ENCODE measurements at regions of chr6 and their contacts with region 1.

Region 1: DNA sequence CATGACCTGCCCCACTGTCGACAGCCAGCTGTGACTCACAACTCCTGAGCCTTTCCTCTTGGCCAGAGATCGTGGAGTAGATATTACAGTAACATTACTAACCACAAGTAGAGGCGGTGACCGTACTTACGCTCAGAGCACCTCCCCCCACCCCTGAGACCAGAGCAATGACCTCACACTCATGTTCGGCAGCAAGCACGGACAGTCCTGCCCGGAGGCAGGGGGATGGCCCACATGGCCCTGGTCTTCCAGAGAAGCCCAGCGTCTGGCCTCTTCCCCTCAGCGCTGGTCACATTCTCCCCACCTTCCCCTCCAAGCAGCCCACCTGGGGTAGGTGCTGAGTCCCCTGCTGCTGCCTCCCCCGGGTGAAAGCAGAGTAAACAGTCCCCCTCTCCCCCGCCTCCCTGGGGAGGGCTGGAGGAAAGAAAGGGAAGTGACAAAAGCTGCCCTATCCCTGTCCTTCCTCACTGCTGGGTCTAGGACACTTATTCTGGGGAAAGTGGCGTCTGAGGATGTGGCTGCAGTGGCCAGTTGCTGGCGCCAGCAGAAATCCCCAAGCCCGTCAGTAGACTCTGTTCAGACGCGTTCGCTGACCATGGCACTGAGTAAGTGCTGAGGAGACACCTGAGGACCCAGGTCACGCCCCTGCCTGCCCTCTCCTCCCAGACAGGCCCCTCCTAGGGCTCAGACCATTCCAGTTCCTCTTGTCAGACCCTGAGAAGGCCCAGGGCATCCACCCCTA is 68.5 kb downstream of the MRPL14 start:
- DNase-seq: peak; percentile 89 to 99
- H3K4me3 ChIP-seq: peak overlapping the region; percentile 25; the same call in 1 of the 2 replicates
- H3K27ac ChIP-seq: peak overlapping the region; percentile 95
- H3K4me1 ChIP-seq: peaks cover 86% of the 10 kb centered on the region
- H3K27me3 ChIP-seq: no peaks in the 10 kb centered on the region
- CTCF ChIP-seq: no peak

Region 2: DNA sequence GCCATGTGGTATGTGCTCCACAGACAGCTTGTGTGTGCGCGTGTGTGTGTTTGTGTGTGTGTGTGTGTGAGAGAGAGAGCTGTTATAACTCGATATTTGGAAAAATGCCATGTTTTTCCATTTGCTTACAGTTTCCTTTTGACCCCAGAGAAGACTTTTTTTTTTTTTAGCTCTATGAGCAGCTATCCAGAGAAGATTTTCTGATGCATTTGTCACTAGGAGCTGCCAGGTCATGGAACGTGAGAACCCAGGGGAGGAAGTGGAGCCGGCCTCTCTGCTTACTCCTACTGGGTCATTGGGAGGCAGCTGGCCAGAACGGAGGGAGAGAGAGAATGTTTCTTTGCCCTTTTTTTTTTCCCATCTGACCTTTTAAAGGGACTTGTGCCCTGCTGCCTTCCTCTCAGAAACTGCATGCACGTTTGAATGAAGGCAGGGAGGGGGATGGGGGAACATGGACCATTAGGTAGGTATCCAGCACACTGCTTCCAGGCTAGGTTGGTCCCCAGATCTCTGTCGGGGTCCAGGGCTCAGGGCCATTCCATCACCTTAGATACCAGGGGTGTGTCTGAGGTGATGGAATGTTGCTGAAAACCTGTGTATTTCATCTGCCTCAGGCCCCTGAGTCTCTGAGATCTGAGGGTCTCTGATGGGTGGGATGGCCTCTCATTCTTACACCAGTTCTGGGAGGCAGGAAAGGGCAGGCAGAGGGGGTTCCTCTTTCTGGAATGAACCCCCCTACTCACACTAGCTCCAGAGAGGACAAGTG is 360.0 kb before region 1 on chr6:
- CTCF ChIA-PET with region 1: no interaction called
- POLR2A ChIA-PET with region 1: interaction called, 11 read pairs
- intact Hi-C with region 1: no loop called
- DNase-seq: peak; percentile 51 to 53
- H3K4me3 ChIP-seq: no peak overlapping the region; the same call in 1 of the 2 replicates
- H3K27ac ChIP-seq: peak overlapping the region; percentile 78
- H3K4me1 ChIP-seq: peaks cover 77% of the 10 kb centered on the region
- H3K27me3 ChIP-seq: no peaks in the 10 kb centered on the region
- CTCF ChIP-seq: no peak

Region 3: DNA sequence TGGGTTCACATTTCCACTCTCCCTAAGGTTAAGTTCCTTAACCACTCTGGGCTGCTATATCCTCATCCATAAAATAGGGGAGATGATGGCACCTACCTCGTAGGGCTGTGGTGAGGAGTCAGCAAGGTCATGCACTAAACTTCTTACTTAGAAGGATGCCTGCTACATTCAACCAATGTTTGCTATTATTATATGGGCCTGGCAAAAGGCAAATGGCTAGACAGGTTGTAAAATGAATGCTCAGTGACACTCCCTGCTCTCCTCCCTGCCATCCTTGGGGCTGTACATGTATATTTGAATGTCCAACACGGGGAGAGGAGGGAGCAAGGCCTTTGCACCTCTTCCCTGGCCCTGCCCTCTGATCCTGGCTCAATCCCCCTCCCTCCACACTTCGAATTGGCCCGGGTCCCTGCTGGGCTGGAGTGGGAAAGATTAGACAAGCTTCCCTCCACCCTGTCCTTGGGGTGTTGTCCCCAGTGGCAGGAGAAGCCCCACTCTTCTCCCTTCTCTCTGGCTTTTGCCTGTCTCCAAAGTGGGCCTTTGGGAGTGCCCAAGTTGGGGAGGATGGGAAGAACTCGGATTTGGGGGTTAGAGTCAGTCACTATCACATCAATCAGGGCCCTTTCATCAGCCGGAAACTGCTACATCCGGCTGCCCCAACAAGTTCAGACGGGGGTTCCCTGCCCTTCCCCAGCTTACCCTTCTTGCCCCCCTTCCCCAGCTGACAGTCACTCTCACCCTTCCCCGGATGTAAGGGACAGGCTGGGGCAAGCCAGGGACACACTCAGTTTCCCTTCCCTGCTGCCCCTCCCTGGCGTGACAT is 325.1 kb before region 1 on chr6:
- CTCF ChIA-PET with region 1: no interaction called
- POLR2A ChIA-PET with region 1: no interaction called
- intact Hi-C with region 1: no loop called
- DNase-seq: no peak
- H3K4me3 ChIP-seq: no peak overlapping the region
- H3K27ac ChIP-seq: no peak overlapping the region
- H3K4me1 ChIP-seq: peaks cover 14% of the 10 kb centered on the region
- H3K27me3 ChIP-seq: no peaks in the 10 kb centered on the region
- CTCF ChIP-seq: no peak

Region 4: DNA sequence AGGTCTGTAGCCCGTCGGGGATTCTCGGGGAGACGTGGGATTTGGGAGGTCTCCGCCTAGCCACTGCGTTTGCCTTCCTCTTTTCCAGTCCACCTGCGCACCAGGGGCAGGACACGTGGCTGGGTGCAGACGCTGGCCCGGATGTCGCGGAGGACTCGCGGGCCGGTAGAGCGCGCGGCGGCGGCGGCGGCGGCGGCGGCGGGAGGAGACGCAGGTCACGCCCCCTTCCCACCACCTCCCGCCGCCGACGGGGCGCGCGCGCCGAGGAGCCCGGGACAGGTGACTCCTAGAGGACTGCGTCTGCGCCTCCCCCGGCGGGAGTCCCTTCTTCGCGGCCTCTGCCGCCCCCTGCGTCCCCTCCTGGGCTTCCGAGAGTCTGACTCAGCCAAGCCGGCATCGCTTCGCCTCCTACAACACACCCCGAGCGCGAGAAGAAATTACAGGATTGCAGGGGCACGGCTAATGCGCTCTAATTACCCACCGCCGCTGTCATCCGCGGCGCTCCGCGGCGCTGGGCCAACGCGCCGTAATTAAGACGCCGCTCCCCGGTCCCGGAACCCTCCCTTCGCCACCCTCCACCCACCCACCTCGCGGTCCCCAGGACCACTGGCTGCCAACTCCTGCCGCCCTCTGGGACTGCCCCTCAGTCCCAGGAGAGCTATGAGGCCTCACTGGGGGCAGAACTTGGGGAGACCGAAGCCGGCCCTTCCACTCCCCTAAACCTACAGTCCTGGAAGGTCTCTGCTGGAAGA is 56.0 kb before region 1 on chr6:
- CTCF ChIA-PET with region 1: no interaction called
- POLR2A ChIA-PET with region 1: no interaction called
- intact Hi-C with region 1: no loop called
- DNase-seq: no peak
- H3K4me3 ChIP-seq: peak overlapping the region; percentile 68; the same call in 1 of the 2 replicates
- H3K27ac ChIP-seq: peak overlapping the region; percentile 93
- H3K4me1 ChIP-seq: peaks cover 65% of the 10 kb centered on the region
- H3K27me3 ChIP-seq: no peaks in the 10 kb centered on the region
- CTCF ChIP-seq: no peak

Region 5: GRCh38 chr6:44034391-44034861 is 24.4 kb before region 1 on chr6:
- CTCF ChIA-PET with region 1: interaction called, 3 read pairs
- POLR2A ChIA-PET with region 1: no interaction called
- intact Hi-C with region 1: loop called (anchors 1 kb)
- DNase-seq: peak; percentile 87 to 94
- H3K4me3 ChIP-seq: peak overlapping the region; percentile 48; the same call in 1 of the 2 replicates
- H3K27ac ChIP-seq: peak overlapping the region; percentile 98
- H3K4me1 ChIP-seq: peaks cover 87% of the 10 kb centered on the region
- H3K27me3 ChIP-seq: no peaks in the 10 kb centered on the region
- CTCF ChIP-seq: no peak

Region 6: DNA sequence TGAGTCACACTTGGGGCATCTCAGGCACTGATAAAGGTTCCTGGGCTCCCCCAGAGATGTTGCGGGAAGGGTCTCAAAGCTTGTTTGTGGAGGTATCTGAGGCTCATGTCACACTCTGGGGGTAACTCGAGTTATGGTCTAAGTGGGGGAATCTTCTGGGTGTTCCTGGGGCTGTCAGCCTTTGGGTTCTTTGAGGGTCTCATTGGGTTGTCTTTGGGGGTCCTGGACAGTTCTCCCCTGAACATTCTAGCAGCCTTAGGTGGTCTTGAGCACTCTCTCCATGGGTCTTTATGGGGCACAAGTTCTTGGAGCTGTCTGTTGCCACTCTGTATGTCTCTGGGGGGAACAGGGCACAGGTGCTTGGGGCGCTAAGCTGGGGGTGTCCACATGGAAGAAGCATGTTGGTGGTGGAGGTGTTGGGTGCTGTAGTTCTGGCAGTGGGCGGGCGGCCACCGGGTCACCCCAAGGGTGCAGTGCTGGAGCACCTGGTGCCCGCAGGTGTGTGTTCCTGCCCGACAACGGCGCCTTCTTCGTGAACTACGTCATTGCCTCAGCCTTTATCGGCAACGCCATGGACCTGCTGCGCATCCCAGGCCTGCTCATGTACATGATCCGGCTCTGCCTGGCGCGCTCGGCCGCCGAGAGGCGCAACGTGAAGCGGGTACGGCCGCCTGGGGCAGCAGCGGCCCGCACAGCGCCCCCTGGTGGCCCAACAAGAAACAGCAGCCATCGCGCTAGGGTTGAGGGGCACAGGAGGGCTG is 92.7 kb after region 1 on chr6:
- CTCF ChIA-PET with region 1: no interaction called
- POLR2A ChIA-PET with region 1: no interaction called
- intact Hi-C with region 1: no loop called
- DNase-seq: peak; percentile 41 to 74
- H3K4me3 ChIP-seq: no peak overlapping the region
- H3K27ac ChIP-seq: no peak overlapping the region
- H3K4me1 ChIP-seq: no peaks in the 10 kb centered on the region
- H3K27me3 ChIP-seq: no peaks in the 10 kb centered on the region
- CTCF ChIP-seq: peak; percentile 99

Region 7: DNA sequence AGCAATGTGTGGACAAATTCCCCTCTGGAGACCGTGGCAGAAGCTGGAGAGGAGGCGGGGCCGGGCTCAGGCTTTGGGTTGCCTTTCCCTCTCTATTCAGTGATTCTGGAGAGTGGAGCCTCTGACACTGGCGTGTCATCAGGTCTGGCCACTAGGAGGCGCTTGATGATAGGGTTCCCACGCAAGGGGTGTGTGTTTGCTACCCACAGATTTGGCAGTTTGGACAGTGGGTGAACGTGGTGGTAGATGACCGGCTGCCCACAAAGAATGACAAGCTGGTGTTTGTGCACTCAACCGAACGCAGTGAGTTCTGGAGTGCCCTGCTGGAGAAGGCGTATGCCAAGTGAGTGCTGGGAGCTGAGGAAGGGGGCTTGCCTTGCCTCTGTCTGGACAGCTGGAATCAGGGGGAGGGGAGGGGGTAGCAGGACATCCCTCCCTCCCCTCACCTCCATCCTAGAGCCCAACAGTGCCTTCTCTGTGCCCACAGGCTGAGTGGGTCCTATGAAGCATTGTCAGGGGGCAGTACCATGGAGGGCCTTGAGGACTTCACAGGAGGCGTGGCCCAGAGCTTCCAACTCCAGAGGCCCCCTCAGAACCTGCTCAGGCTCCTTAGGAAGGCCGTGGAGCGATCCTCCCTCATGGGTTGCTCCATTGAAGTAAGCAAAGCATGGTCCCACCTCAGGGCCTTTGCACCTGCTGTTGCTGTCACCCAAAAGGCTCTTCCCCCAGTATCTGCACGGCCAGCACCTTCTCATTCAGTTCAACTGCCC is 114.1 kb after region 1 on chr6:
- CTCF ChIA-PET with region 1: no interaction called
- POLR2A ChIA-PET with region 1: no interaction called
- intact Hi-C with region 1: no loop called
- DNase-seq: peak; percentile 67 to 74
- H3K4me3 ChIP-seq: no peak overlapping the region
- H3K27ac ChIP-seq: no peak overlapping the region
- H3K4me1 ChIP-seq: no peaks in the 10 kb centered on the region
- H3K27me3 ChIP-seq: 0 out of 2 replicates have a peak, but pooled peaks cover 10% of the 10 kb centered on the region
- CTCF ChIP-seq: peak; percentile 92

Measured in PC-9 (cell line).